Activated CD4-positive, alpha-beta memory T cell treated with anti-CD3 and anti-CD28 coated beads for 36 hours (primary cell): ENCODE measurements at regions of chr17 and their contacts with region 1.

Region 1: DNA sequence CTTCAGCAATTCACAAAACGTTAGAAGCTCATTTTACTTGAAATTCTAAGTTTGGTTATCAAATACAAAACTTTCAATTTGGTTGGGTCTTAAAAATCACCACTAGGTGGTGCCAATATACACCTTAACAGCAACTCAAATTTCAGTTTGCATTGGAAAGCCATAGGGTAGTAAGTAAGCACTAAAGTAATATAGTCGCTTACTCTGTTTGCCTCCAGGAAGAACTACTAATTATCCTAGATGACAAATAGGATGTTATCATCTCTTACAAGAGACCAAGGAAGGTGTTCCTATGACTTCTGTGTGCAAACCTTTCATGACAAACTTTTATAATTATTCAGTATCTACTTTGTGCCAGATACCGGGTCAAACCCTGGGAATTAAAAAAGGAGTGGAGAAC is 93.3 kb downstream of the MYO1D start:
- DNase-seq: no peak
- H3K4me3 Mint-ChIP-seq: no peak overlapping the region
- H3K27ac Mint-ChIP-seq: no peak overlapping the region
- H3K4me1 Mint-ChIP-seq: no peaks in the 10 kb centered on the region
- H3K27me3 Mint-ChIP-seq: no peaks in the 10 kb centered on the region

Region 2: GRCh38 chr17:32805029-32805976 is 21.7 kb after region 1 on chr17:
- CTCF ChIA-PET with region 1: interaction called, 17 read pairs
- POLR2A ChIA-PET with region 1: no interaction called
- intact Hi-C with region 1: no loop called
- DNase-seq: no peak
- H3K4me3 Mint-ChIP-seq: no peak overlapping the region
- H3K27ac Mint-ChIP-seq: no peak overlapping the region
- H3K4me1 Mint-ChIP-seq: peaks cover 8% of the 10 kb centered on the region
- H3K27me3 Mint-ChIP-seq: peaks cover 1% of the 10 kb centered on the region

Region 3: DNA sequence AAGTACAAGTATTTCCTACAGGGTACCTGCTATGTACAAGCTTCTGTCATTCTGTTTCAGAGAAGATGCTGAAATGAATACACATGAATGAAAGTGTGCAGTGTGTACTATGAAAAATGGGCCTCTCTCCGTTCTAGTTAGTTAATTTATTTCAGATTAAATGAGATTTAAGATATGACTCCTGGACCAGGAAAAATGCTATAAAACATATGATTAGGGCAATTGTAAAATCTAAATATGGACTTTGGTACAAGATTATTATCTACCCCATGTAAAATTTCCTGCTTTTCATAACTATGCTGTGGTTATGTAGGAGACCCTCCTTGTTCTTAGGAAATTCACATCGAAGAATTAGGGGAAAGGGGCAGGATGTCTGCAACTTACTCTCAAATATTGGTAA is 64.4 kb after region 1 on chr17:
- CTCF ChIA-PET with region 1: no interaction called
- POLR2A ChIA-PET with region 1: no interaction called
- intact Hi-C with region 1: no loop called
- DNase-seq: no peak
- H3K4me3 Mint-ChIP-seq: no peak overlapping the region
- H3K27ac Mint-ChIP-seq: no peak overlapping the region
- H3K4me1 Mint-ChIP-seq: no peaks in the 10 kb centered on the region
- H3K27me3 Mint-ChIP-seq: no peaks in the 10 kb centered on the region

Region 4: DNA sequence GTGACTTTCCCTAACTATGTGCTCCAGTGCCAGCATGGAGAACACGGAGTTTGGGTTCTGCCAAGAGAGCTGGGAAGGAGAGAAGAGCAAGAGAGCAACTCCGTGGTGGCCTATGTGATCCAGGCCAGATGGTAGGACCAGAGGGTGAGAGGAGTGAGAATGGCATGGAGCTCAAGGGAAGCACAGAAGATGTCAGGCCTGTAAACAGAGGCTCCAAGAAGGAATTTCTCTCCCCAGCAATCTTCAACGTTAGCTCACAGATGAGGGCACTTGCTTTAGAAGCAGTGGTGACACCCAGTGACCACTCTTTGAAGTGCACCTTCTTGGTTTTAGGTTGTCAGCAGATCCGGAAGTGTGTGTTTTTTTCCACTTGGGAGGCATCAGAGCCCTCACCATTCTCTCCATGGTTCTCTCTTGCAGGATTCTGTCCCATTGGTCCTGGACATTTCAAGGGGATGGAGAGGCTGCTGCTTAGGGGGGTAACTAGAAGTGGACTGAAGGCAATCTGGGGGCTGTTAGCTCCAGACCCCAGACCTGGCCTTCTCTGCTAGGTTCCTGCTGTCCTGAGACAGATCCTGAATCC is 126.3 kb after region 1 on chr17:
- CTCF ChIA-PET with region 1: interaction called, 49 read pairs
- POLR2A ChIA-PET with region 1: no interaction called
- intact Hi-C with region 1: loop called (anchors 1 kb)
- DNase-seq: peak; percentile 79
- H3K4me3 Mint-ChIP-seq: no peak overlapping the region
- H3K27ac Mint-ChIP-seq: no peak overlapping the region
- H3K4me1 Mint-ChIP-seq: peaks cover 20% of the 10 kb centered on the region
- H3K27me3 Mint-ChIP-seq: peaks cover 20% of the 10 kb centered on the region

Region 5: DNA sequence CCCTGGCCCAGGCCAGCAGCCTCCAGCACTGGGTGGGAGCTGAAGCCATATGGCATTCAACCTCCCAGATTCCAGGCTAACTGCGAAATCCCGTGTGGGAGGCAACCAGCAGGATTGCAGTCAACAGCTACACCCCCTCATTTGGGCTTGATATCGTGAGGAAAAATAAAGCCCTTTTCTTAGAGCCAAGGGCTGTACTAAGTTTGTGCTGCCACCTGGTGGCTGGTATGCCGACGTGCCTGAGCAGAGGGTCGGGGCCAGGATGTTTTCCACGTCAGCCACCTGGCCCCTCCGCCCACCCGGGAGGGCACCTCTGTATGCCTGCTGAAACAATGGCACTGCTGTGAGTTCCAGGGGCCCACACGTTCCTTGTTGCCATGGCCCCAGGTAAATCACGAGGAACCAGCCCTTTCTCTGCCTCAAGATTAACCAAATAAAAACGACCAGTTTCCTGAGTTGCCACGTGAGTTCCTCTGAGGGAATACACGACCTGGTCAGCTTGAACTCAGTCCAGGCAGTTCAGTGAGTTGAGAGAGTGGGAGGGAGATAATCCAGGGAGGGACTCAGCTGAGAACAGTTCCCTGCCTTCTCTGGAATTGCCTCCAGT is 153.4 kb after region 1 on chr17:
- CTCF ChIA-PET with region 1: interaction called, 173 read pairs
- POLR2A ChIA-PET with region 1: interaction called, 3 read pairs
- intact Hi-C with region 1: loop called (anchors 1 kb)
- DNase-seq: peak; percentile 74
- H3K4me3 Mint-ChIP-seq: no peak overlapping the region
- H3K27ac Mint-ChIP-seq: no peak overlapping the region
- H3K4me1 Mint-ChIP-seq: peaks cover 6% of the 10 kb centered on the region
- H3K27me3 Mint-ChIP-seq: peaks cover 27% of the 10 kb centered on the region

Region 6: DNA sequence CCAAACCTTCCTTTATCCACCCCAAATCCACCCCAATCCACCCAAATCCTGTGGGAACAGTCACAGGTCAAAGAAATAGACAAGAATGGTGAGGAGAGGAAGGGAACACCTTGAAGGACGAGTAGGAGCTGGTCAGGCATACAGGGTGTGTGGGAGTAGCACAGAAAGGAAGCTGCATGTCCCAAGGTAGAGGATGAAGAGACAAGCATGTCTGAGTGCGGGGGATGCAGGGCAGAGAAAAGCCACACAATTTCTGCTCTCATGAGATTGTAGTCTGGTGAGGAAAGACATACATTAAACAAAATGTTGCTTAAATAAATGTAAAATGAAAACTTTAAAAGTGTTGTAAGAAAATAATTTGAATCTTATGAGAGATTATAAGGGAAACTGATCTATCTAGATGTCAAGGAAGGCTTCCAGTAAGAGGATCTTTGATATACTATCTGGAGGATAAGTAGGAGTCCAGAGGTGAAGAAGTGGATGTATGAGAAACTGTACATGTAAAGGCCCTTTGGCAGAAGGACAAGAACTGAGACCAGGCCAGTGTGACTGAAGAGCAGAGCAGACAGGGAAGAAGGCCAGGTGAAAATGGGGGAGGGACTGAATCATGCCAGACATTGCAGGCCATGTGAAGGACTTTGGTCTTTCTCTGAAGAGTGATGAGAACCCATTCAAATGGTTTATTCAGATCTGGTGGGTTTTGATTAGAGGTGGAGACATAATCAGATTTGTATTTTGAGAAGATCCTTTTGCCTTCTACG is 163.0 kb after region 1 on chr17:
- CTCF ChIA-PET with region 1: interaction called, 173 read pairs
- POLR2A ChIA-PET with region 1: no interaction called
- intact Hi-C with region 1: no loop called
- DNase-seq: no peak
- H3K4me3 Mint-ChIP-seq: no peak overlapping the region
- H3K27ac Mint-ChIP-seq: no peak overlapping the region
- H3K4me1 Mint-ChIP-seq: no peaks in the 10 kb centered on the region
- H3K27me3 Mint-ChIP-seq: peaks cover under 1% of the 10 kb centered on the region

Region 7: GRCh38 chr17:32997753-32998632 is 214.4 kb after region 1 on chr17:
- CTCF ChIA-PET with region 1: interaction called, 11 read pairs
- POLR2A ChIA-PET with region 1: no interaction called
- intact Hi-C with region 1: loop called (anchors 1 kb)
- DNase-seq: peak; percentile 80
- H3K4me3 Mint-ChIP-seq: no peak overlapping the region
- H3K27ac Mint-ChIP-seq: no peak overlapping the region
- H3K4me1 Mint-ChIP-seq: peaks cover 4% of the 10 kb centered on the region
- H3K27me3 Mint-ChIP-seq: peaks cover 12% of the 10 kb centered on the region